WTC11 (cell line): ENCODE measurements at regions of chr3 and their contacts with region 1.

Region 1: DNA sequence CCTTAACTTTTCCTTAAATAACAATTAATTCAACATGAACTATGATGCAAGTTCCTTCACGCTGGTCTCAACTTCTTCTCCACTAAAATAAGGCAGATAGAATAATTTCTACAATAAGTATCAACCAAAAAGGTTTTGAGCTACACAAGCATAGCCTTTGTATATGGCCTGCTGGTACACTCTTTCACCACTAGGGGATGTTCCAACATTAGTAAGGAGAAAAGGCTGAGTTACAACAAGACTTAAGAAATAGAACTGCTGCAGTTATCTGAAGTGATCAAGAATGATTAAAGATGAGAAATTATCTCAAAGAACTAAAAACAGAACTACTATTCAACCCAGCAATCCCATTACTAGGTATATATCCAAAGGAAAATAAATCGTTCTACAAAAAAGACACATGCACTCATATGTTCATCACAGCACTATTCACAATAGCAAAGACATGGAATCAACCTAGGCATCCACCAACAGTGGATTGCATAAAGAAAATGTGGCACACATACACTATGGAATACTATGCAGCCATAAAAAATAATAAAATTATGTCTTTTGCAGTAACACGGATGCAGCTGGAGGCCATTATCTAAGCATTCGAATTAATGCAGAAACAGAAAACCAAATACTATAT is 14.4 kb downstream of the ATP13A3 start:
- DNase-seq: no peak
- ATAC-seq: peak; percentile 77
- H3K4me3 Mint-ChIP-seq: no peak overlapping the region
- H3K27ac Mint-ChIP-seq: peak overlapping the region; percentile 63; the same call in 1 of the 2 replicates
- H3K4me1 Mint-ChIP-seq: peaks cover 32% of the 10 kb centered on the region
- H3K27me3 Mint-ChIP-seq: no peaks in the 10 kb centered on the region
- CTCF ChIP-seq: peak; percentile 80

Region 2: DNA sequence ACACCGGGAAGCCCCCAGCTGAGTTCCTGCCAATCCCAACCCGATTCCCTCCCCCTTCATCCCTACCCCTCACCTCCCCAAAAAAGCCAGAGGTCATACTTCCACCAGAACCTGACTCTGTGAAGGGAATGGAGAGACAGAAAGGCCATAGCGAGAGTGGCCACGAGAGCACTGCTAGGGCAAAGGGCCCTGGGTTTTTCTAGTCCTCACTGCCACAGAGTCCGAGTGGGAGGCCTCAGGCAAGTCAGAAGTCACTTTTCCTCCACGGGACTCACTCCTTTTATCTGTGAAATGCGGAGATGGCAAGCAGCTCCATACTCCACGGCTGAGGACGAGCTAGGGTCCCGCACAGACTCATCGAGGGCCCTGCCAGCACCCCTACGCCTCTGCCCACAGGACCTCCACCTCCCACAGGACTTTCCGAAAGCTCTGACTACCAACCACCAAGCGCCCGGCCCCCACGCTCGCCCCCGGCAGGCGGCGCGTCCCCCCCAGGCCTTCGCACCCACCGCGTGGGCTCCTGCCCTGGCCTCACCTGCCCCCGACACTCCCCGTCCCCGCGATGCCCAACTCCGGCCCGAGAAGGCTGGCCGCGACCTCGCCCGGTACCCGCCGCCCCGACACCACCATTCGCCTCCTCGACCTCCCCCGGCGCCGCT is 13.6 kb after region 1 on chr3:
- CTCF ChIA-PET with region 1: interaction called, 13 read pairs
- POLR2A ChIA-PET with region 1: no interaction called
- DNase-seq: peak; percentile 22
- ATAC-seq: peak; percentile 10
- H3K4me3 Mint-ChIP-seq: peak overlapping the region; percentile 81
- H3K27ac Mint-ChIP-seq: no peak overlapping the region
- H3K4me1 Mint-ChIP-seq: peaks cover 22% of the 10 kb centered on the region
- H3K27me3 Mint-ChIP-seq: peaks cover 14% of the 10 kb centered on the region; the same call in 1 of the 2 replicates
- CTCF ChIP-seq: no peak

Region 3: GRCh38 chr3:194512895-194513601 is 40.6 kb after region 1 on chr3:
- CTCF ChIA-PET with region 1: interaction called, 19 read pairs
- POLR2A ChIA-PET with region 1: no interaction called
- DNase-seq: no peak
- ATAC-seq: no peak
- H3K4me3 Mint-ChIP-seq: no peak overlapping the region
- H3K27ac Mint-ChIP-seq: no peak overlapping the region
- H3K4me1 Mint-ChIP-seq: no peaks in the 10 kb centered on the region
- H3K27me3 Mint-ChIP-seq: no peaks in the 10 kb centered on the region
- CTCF ChIP-seq: no peak

Region 4: DNA sequence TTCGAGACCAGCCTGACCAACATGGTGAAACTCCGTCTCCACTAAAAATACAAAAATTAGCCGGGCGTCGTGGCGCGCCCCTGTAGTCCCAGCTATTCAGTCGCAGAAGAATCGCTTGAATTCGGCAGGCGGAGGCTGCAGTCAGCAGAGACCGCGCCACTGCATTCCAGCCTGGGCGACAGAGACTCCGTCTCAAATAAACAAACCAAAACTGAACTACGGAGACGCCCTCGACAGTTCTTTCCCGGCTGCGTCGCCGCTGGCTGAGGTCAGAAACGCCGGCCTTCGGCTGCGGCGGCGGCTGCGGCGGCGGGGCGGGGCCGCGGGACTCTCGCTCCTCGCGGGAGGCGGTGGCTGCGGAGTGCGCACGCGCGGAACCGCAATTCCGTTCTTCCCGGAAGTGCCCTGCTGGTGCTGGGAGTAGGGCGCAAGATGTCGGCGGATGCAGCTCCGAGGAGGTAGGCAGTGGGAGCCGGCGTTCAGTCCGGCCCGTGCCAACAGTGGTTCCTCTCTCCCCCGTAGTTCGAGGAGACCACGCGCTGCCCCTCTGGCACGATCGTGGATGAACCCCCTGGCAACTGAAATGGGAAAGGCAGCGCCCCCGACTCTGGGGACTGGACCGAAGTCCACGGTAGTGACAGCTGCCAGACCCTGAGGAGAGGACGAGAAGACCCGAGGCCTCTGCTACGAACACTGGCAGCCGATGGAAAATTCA is 111.4 kb after region 1 on chr3:
- CTCF ChIA-PET with region 1: interaction called, 10 read pairs
- POLR2A ChIA-PET with region 1: no interaction called
- DNase-seq: peak; percentile 94
- ATAC-seq: peak; percentile 84
- H3K4me3 Mint-ChIP-seq: peak overlapping the region; percentile 95
- H3K27ac Mint-ChIP-seq: peak overlapping the region; percentile 97
- H3K4me1 Mint-ChIP-seq: peaks cover 9% of the 10 kb centered on the region
- H3K27me3 Mint-ChIP-seq: peaks cover 4% of the 10 kb centered on the region; the same call in 1 of the 2 replicates
- CTCF ChIP-seq: no peak

Region 5: DNA sequence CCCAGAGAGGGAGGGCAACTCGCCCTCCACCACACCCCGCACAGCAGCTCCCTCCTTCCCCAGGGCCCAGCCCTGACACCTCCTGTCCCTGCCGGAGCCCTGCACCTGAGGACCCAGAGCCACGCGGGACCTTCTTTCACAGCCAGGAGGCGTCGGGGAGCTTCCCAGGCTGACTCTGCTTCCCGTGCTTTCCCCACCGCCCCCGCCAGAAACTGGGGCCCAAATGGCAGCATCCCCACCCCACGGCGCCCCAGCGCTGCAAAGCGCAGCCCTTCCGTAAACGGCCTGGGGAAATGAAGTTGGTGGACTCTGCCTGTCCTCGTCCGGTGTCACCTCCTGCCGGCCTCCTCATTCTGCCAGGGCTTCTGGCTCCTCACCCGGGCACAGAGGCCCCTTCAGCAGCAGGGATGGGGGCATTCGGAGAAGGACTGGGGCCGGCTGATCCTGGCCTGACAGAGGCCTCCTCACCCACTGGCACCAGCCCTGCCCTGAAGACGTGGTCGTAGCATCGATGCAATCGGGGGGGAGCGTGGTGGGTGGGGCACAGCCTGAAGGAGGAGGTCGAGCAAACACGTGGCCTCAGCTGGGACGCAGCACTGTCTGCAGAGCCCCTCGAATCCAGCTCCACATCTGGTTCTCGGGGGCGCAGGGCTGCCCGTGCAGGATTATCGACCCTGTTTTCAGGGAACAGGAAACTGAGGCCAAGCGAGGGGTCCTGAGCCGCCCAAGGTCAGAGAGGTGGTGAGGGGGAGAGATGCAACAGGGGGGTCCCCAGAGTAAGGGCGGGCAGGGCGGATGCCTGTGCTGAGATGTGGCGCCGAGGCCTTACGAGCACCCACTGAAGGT is 563.2 kb after region 1 on chr3:
- CTCF ChIA-PET with region 1: no interaction called
- POLR2A ChIA-PET with region 1: interaction called, 10 read pairs
- DNase-seq: peak; percentile 73
- ATAC-seq: peak; percentile 74
- H3K4me3 Mint-ChIP-seq: no peak overlapping the region; the same call in 1 of the 2 replicates
- H3K27ac Mint-ChIP-seq: no peak overlapping the region
- H3K4me1 Mint-ChIP-seq: peaks cover 59% of the 10 kb centered on the region
- H3K27me3 Mint-ChIP-seq: peaks cover 15% of the 10 kb centered on the region
- CTCF ChIP-seq: no peak